MCF 10A (cell line): ENCODE measurements at regions of chr2 and their contacts with region 1.

Region 1: GRCh38 chr2:62774555-62775366 is 69.2 kb downstream of the EHBP1 start:
- DNase-seq: peak; percentile 62
- H3K4me3 Mint-ChIP-seq: no peak overlapping the region
- H3K27ac Mint-ChIP-seq: peak overlapping the region; percentile 51
- H3K4me1 Mint-ChIP-seq: peaks cover 4% of the 10 kb centered on the region
- H3K27me3 Mint-ChIP-seq: no peaks in the 10 kb centered on the region
- CTCF ChIP-seq: peak; percentile 76

Region 2: DNA sequence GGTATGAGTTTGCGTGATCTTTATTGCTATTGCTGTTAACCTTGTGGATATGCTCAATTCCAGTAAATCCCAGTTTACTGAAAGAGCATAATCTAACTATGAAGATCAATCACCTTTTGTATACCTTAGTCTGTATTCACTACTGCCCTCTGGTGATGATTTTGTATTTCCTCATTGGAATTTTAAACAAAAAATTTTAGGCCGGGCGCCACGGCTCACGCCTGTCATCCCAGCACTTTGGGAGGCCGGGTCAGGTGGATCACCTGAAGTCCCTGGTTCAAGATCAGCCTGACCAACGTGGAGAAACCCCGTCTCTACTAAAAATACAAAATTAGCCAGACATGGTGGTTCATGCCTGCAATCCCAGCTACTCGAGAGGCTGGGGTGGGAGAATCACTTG is 864.2 kb before region 1 on chr2:
- CTCF ChIA-PET with region 1: no interaction called
- POLR2A ChIA-PET with region 1: no interaction called
- intact Hi-C with region 1: loop called (anchors 10 kb)
- DNase-seq: peak; percentile 38
- H3K4me3 Mint-ChIP-seq: no peak overlapping the region
- H3K27ac Mint-ChIP-seq: no peak overlapping the region
- H3K4me1 Mint-ChIP-seq: no peaks in the 10 kb centered on the region
- H3K27me3 Mint-ChIP-seq: no peaks in the 10 kb centered on the region
- CTCF ChIP-seq: no peak

Region 3: GRCh38 chr2:62424899-62425298 is 349.9 kb before region 1 on chr2:
- CTCF ChIA-PET with region 1: interaction called, 3 read pairs
- POLR2A ChIA-PET with region 1: interaction called, 3 read pairs
- intact Hi-C with region 1: loop called (anchors 1 kb)
- DNase-seq: peak; percentile 17
- H3K4me3 Mint-ChIP-seq: peak overlapping the region; percentile 33
- H3K27ac Mint-ChIP-seq: peak overlapping the region; percentile 97
- H3K4me1 Mint-ChIP-seq: peaks cover 27% of the 10 kb centered on the region
- H3K27me3 Mint-ChIP-seq: no peaks in the 10 kb centered on the region
- CTCF ChIP-seq: no peak

Region 4: DNA sequence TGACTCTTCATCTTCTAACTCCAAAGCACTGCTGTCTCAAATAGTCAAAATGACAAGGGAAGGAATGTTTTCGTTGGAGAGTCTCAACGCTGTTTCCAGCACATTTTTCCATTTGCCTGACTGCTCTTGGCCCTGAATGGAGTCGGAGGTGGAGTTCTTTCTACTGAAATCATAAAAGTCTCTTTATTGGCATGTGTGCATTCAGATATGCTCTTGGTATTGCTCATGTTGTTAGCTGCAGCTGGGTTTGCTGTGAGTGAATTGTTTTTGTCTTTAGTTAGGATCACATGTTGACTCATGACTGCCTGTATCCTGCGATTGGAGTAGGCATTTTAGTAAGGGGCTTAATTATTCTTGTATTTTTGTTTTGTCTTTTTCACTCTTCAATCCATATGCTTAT is 285.6 kb before region 1 on chr2:
- CTCF ChIA-PET with region 1: interaction called, 12 read pairs
- POLR2A ChIA-PET with region 1: no interaction called
- intact Hi-C with region 1: no loop called
- DNase-seq: no peak
- H3K4me3 Mint-ChIP-seq: no peak overlapping the region
- H3K27ac Mint-ChIP-seq: no peak overlapping the region
- H3K4me1 Mint-ChIP-seq: peaks cover 9% of the 10 kb centered on the region
- H3K27me3 Mint-ChIP-seq: no peaks in the 10 kb centered on the region
- CTCF ChIP-seq: no peak

Region 5: DNA sequence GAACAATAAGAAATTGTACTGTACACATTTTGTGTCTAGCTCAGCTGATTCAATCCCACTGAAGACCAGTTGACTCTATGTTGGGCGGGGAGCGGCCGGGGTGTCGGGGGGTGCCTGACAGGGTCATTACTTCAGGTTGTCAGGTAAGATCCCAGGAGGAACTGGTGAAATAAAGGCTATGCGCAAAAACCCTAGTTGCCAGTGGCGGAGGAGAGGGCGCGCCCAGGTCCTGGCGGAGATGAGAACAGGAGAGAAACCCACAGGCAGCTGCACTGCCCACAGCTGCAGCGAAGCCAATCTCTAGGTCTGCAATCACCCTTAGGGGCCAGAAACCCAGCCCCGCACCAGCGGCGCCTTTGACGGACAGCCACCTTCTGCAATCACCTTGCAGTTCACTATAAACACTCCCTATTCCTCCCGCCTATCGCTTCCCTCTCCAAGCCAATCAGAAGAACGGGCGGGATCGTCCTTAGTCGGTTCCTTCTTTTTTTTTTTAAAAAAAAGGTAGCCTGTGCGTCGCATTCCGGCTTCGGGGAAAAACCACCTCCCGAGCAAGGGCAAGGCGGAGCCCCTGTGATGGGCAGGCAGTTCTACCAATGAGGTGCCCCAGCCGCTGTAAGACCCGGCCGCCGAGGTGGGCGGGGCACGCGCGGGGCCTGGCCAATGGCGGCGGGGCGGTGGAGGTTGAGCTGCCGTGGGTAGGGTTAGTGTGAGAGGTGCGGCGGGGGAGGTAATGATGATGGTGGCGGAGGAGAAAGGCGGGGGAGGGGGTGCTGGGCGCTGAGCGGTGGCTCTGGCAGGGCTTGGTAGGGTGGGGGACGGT is 69.5 kb before region 1 on chr2 and contains the start of gene EHBP1:
- CTCF ChIA-PET with region 1: interaction called, 3 read pairs
- POLR2A ChIA-PET with region 1: interaction called, 3 read pairs
- intact Hi-C with region 1: loop called (anchors 5 kb)
- DNase-seq: peak; percentile 100
- H3K4me3 Mint-ChIP-seq: peak within 1 kb of the TSS; percentile 87
- H3K27ac Mint-ChIP-seq: peak within 1 kb of the TSS; percentile 78
- H3K4me1 Mint-ChIP-seq: peaks cover 30% of the 10 kb centered on the region
- H3K27me3 Mint-ChIP-seq: no peaks in the 10 kb centered on the region
- CTCF ChIP-seq: no peak
- total RNA-seq, gene EHBP1: 62.1 and 81.2 TPM in 2 replicates